Transverse colon (tissue), 4 donors: ENCODE measurements at regions of chr2 and their contacts with region 1.

Region 1: DNA sequence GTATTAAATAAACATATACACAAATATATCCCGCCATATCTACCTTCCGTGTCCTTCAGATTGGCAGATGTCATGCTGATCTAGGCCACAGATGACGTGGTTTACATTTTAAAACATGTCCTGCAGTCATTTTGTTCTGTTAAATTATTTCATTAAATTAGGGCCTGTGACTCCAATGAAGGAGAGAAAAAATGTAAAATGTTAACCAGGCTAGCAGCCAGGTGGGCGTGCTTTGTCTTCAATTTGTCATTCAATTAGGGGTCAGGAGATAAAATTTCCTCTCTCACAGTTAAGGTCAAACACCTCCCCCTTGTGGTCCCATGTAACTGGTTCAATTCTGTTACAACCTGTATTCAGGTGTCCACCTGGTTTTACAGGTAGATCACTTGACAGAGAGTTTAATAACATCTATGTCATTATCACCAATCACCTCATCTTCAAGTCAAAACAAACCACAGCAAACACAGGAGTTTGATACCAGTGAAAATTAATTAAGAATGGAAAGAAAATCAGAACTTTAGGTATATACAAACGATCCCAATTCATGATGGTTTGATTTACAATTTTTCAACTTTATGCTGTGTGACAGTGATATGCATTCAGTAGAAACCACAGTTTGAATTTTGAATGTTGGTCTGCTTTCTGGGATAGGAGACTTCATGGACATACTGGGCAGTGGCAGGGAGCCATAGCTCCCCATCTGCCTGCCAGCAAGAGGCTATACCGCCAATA is 339.4 kb downstream of the CMPK2 start:
- DNase-seq: peak; percentile 11
- H3K4me3 ChIP-seq: no peak overlapping the region
- H3K27ac ChIP-seq: no peak overlapping the region
- H3K4me1 ChIP-seq: no peaks in the 10 kb centered on the region
- H3K27me3 ChIP-seq: no peaks in the 10 kb centered on the region
- CTCF ChIP-seq: peak in 4 of 5 experiments; percentile 26 to 67 (median 46)
- EP300 ChIP-seq: no peak
- POLR2A ChIP-seq: no peak

Region 2: GRCh38 chr2:6352906-6353515 is 173.2 kb before region 1 on chr2:
- in situ Hi-C with region 1: loop called in 2 of 4 experiments (anchors 10 kb)
- intact Hi-C with region 1: no loop called
- DNase-seq: peak; percentile 71
- H3K4me3 ChIP-seq: no peak overlapping the region
- H3K27ac ChIP-seq: no peak overlapping the region
- H3K4me1 ChIP-seq: peaks cover 0 to 7% (median 0%) of the 10 kb centered on the region in 4 donors
- H3K27me3 ChIP-seq: no peaks in the 10 kb centered on the region
- CTCF ChIP-seq: peak; percentile 55 to 87 (median 75)
- EP300 ChIP-seq: no peak
- POLR2A ChIP-seq: no peak

Region 3: DNA sequence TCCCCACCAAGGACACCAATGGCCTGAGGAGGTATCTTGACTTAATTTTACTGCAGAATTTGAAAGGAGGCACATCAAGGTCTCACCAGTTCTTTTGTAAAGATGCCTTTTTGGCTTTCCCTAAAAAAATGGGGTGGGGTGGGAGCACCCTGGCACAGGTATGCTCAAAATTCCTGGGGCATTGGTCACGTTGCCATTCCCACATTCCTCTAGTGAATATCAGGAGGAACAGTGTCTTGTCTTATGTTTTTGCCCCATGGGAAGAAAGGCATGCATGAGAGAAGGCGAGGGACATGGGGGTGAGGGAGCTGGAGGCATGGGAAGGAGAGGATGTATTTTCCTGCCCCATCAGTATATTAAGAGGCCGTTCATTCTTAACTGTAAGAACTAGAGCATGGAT is 64.2 kb after region 1 on chr2:
- in situ Hi-C with region 1: no loop called
- intact Hi-C with region 1: loop called (anchors 2 kb)
- DNase-seq: no peak
- H3K4me3 ChIP-seq: no peak overlapping the region
- H3K27ac ChIP-seq: no peak overlapping the region
- H3K4me1 ChIP-seq: no peaks in the 10 kb centered on the region
- H3K27me3 ChIP-seq: no peaks in the 10 kb centered on the region
- CTCF ChIP-seq: no peak
- EP300 ChIP-seq: no peak
- POLR2A ChIP-seq: no peak